PC-3 (cell line): ENCODE measurements at regions of chr11 and their contacts with region 1.

Region 1: GRCh38 chr11:27296497-27296896 is 66.5 kb downstream of the CCDC34 start:
- DNase-seq: peak; percentile 74
- ATAC-seq: peak; percentile 75
- H3K4me3 ChIP-seq: no peak overlapping the region
- H3K27ac ChIP-seq: no peak overlapping the region
- H3K4me1 ChIP-seq: peaks cover 17% of the 10 kb centered on the region
- H3K27me3 ChIP-seq: no peaks in the 10 kb centered on the region
- CTCF ChIP-seq: peak; percentile 87

Region 2: GRCh38 chr11:27183672-27184457 is 112.6 kb before region 1 on chr11:
- CTCF ChIA-PET with region 1: interaction called, 22 read pairs
- POLR2A ChIA-PET with region 1: interaction called, 4 read pairs
- intact Hi-C with region 1: loop called (anchors 1 kb)
- DNase-seq: peak; percentile 71
- ATAC-seq: peak; percentile 33; the same call in 1 of the 2 replicates
- H3K4me3 ChIP-seq: no peak overlapping the region
- H3K27ac ChIP-seq: no peak overlapping the region
- H3K4me1 ChIP-seq: no peaks in the 10 kb centered on the region
- H3K27me3 ChIP-seq: no peaks in the 10 kb centered on the region
- CTCF ChIP-seq: peak; percentile 84

Region 3: DNA sequence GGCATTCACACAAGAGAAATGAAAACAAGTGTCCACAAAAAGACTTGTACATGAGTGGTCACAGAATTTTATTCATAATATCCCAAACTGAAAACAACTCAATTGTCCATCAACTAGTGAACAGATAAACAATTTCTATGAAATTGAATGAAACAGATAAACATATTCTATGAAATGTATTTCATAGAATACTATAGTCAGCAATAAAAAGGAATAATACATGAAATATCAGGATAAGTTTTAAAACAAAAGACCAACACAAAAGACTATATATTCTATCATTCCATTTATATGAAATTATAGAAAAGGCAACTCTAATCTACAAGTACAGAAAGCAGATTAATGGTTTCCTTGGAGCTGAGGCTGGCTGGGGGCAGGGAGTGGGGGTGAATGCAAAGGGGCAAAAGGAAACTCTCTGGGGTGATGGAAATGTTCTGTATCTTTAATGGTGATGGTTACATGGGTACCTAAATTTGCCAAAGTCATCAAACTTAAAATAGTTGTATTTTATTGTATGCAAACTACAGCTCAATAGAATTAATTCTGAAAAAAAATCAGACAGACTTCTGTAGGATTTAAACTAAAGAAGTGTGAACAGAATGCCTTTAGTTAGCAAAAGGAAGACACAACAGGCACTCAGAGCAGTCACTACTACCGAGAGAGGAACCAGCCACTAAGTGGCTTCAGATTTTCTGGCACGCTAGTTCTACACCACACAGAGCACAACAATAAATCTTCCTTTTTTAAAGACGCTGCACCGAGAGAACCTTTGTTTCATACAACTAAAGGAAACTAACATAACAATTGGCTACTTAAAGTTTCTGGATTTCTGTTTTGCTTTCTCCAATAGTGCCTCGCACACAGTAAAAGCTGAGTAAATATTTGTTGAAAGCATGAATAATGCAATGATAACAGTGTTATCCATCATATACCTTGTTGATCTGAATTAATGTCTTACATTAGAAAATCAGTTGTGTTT is 51.2 kb after region 1 on chr11:
- CTCF ChIA-PET with region 1: no interaction called
- POLR2A ChIA-PET with region 1: no interaction called
- intact Hi-C with region 1: loop called (anchors 2 kb)
- DNase-seq: peak; percentile 47
- ATAC-seq: peak; percentile 94
- H3K4me3 ChIP-seq: peak overlapping the region; percentile 55; the same call in 1 of the 2 replicates
- H3K27ac ChIP-seq: peak overlapping the region; percentile 44
- H3K4me1 ChIP-seq: peaks cover 14% of the 10 kb centered on the region
- H3K27me3 ChIP-seq: no peaks in the 10 kb centered on the region
- CTCF ChIP-seq: no peak

Region 4: GRCh38 chr11:27392278-27393114 is 96.0 kb after region 1 on chr11:
- CTCF ChIA-PET with region 1: interaction called, 5 read pairs
- POLR2A ChIA-PET with region 1: interaction called, 3 read pairs
- intact Hi-C with region 1: loop called (anchors 1 kb)
- DNase-seq: peak; percentile 74
- ATAC-seq: peak; percentile 60
- H3K4me3 ChIP-seq: no peak overlapping the region
- H3K27ac ChIP-seq: peak overlapping the region; percentile 71
- H3K4me1 ChIP-seq: peaks cover 55% of the 10 kb centered on the region
- H3K27me3 ChIP-seq: no peaks in the 10 kb centered on the region
- CTCF ChIP-seq: no peak

Region 5: DNA sequence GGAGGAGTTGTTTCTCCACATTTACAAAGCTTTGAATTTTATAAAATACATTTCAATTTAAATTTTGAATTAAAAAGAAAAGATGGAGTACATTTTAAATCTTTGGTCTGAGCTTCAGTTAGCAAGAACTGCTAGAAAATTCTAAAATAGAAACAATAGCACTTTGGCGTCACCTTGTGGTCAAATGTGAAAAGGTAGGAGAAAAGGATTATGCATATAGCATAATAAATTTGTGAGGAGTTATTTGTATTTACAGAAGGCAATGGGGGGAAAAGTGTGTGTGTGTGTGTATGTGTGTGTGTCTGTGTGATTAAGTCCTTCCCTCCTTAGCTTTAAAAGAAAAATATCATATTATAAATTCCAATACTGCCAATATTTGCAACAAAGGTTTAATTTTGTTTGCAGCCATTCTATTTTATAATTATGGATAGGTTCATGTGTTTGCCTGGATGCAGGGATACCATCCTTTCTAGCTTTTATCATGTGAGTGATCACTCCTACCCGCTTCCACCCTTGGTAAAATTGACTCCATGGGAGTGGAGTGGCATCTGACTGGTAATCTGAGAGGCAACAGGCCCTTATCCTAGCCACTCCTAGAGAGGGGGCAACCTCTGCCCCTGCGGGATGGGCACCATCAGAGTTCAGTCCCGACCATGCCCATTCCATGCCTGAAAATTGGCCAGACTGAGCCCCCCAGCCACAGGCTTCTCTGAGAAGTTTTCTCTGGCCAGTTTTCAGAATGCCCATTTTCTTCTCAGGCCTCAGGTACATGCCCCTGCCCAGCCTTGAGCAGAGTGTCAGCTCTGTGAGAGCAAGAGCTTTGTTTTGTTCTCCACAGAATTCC is 189.7 kb after region 1 on chr11:
- CTCF ChIA-PET with region 1: interaction called, 8 read pairs
- POLR2A ChIA-PET with region 1: no interaction called
- intact Hi-C with region 1: loop called (anchors 1 kb)
- DNase-seq: peak; percentile 85
- ATAC-seq: peak; percentile 76
- H3K4me3 ChIP-seq: no peak overlapping the region
- H3K27ac ChIP-seq: no peak overlapping the region
- H3K4me1 ChIP-seq: no peaks in the 10 kb centered on the region
- H3K27me3 ChIP-seq: no peaks in the 10 kb centered on the region
- CTCF ChIP-seq: peak; percentile 88